CD8-positive, alpha-beta T cell (primary cell): ENCODE measurements at regions of chr11 and their contacts with region 1.

Region 1: GRCh38 chr11:28938091-28938490 is 829.9 kb downstream of the METTL15 start:
- DNase-seq: no peak
- ATAC-seq: no peak
- H3K4me3 ChIP-seq: no peak overlapping the region
- H3K4me3 Mint-ChIP-seq: no peak overlapping the region
- H3K27ac ChIP-seq: no peak overlapping the region
- H3K27ac Mint-ChIP-seq: no peak overlapping the region
- H3K4me1 ChIP-seq: no peaks in the 10 kb centered on the region
- H3K4me1 Mint-ChIP-seq: no peaks in the 10 kb centered on the region
- H3K27me3 ChIP-seq: no peaks in the 10 kb centered on the region
- H3K27me3 Mint-ChIP-seq: no peaks in the 10 kb centered on the region
- CTCF ChIP-seq: no peak

Region 2: DNA sequence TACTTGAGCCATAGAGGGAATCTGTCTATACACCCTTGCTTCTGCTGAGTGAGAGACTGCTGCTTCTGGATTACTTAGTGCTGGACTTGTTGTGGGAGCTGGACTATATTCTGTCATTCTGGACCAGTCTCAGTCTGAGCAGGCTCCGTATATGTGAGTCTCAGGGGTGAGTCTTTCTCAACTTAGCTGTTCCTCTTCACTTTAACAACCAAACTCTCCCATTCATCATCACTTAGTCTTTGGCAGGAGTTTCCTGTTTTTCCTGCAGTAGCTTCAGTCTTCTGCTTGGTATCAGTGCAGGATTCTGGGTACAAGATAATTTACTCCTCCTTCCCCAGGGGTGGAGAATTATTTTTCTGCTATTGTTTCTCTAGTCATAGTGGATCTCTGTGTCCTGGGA is 50.4 kb before region 1 on chr11:
- CTCF ChIA-PET with region 1: no interaction called
- POLR2A ChIA-PET with region 1: no interaction called
- intact Hi-C with region 1: loop called in 1 of 2 experiments (anchors 10 kb)
- DNase-seq: no peak
- ATAC-seq: no peak
- H3K4me3 ChIP-seq: no peak overlapping the region
- H3K4me3 Mint-ChIP-seq: no peak overlapping the region
- H3K27ac ChIP-seq: no peak overlapping the region
- H3K27ac Mint-ChIP-seq: no peak overlapping the region
- H3K4me1 ChIP-seq: no peaks in the 10 kb centered on the region
- H3K4me1 Mint-ChIP-seq: no peaks in the 10 kb centered on the region
- H3K27me3 ChIP-seq: no peaks in the 10 kb centered on the region
- H3K27me3 Mint-ChIP-seq: no peaks in the 10 kb centered on the region
- CTCF ChIP-seq: no peak